ENCODE measurements at regions of chr19 and their contacts with region 1.

Region 1: GRCh38 chr19:18091217-18091608 is 4.5 kb upstream of the IL12RB1 start:
- DNase-seq: peak; percentile 55 to 94 (median 74)
- ATAC-seq: peak; percentile 69
- H3K4me3 ChIP-seq: no peak overlapping the region
- H3K4me3 Mint-ChIP-seq: peak overlapping the region; percentile 82
- H3K27ac ChIP-seq: peak overlapping the region; percentile 74 to 93
- H3K27ac Mint-ChIP-seq: peak overlapping the region; percentile 98
- H3K4me1 ChIP-seq: peaks cover 67% of the 10 kb centered on the region
- H3K4me1 Mint-ChIP-seq: peaks cover 58% of the 10 kb centered on the region
- H3K27me3 ChIP-seq: no peaks in the 10 kb centered on the region
- H3K27me3 Mint-ChIP-seq: no peaks in the 10 kb centered on the region
- CTCF ChIP-seq: no peak

Region 2: DNA sequence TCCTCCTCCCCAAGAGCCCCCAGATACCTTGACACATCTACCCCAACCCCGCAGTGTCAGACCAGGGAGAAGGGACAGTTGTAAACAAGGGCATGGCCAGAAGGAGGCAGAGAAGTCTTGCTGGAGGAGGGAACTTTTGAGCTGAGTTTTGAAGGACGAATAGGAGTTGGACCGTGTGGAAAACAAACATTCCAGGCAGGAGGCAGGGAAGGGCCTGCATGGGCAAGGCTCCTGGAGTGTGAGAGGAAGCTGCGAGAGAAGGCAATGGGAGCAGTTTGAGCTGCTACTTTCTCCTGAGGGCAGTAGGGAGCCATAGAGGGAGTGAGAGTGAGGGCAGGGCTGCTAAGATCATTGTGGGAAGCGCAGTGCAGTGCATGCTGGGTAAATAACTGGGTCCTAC is 27.8 kb before region 1 on chr19:
- CTCF ChIA-PET with region 1: interaction called, 10 read pairs
- POLR2A ChIA-PET with region 1: interaction called, 5 read pairs
- intact Hi-C with region 1: no loop called
- DNase-seq: peak in 8 of 14 experiments; percentile 24 to 65 (median 41)
- ATAC-seq: no peak
- H3K4me3 ChIP-seq: no peak overlapping the region
- H3K4me3 Mint-ChIP-seq: no peak overlapping the region
- H3K27ac ChIP-seq: no peak overlapping the region
- H3K27ac Mint-ChIP-seq: no peak overlapping the region
- H3K4me1 ChIP-seq: peaks cover 4% of the 10 kb centered on the region
- H3K4me1 Mint-ChIP-seq: peaks cover 4% of the 10 kb centered on the region
- H3K27me3 ChIP-seq: no peaks in the 10 kb centered on the region
- H3K27me3 Mint-ChIP-seq: no peaks in the 10 kb centered on the region
- CTCF ChIP-seq: no peak

Region 3: GRCh38 chr19:18141031-18141430 is 49.8 kb after region 1 on chr19:
- CTCF ChIA-PET with region 1: no interaction called
- POLR2A ChIA-PET with region 1: no interaction called
- intact Hi-C with region 1: no loop called
- DNase-seq: no peak
- ATAC-seq: no peak
- H3K4me3 ChIP-seq: no peak overlapping the region
- H3K4me3 Mint-ChIP-seq: no peak overlapping the region
- H3K27ac ChIP-seq: no peak overlapping the region
- H3K27ac Mint-ChIP-seq: no peak overlapping the region
- H3K4me1 ChIP-seq: no peaks in the 10 kb centered on the region
- H3K4me1 Mint-ChIP-seq: no peaks in the 10 kb centered on the region
- H3K27me3 ChIP-seq: no peaks in the 10 kb centered on the region
- H3K27me3 Mint-ChIP-seq: no peaks in the 10 kb centered on the region
- CTCF ChIP-seq: no peak

Region 4: DNA sequence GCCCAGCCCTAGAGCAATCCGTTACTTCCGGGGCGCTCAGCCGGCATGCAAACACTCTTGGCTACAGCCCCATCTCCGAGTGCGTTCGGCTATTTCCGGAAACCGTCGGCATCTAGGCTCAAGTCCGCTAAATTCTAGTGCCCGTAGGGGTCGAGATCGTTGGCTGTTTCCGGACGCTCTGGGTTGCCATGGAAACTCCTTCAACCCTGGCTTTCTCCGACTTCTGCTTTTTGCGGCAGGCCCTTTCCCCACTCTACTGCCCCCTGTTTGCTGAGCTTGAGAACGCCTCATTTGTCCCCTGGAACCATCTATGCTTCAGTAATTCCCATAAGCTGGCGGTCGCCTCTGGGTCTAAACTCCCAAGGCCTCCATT is 61.2 kb after region 1 on chr19:
- CTCF ChIA-PET with region 1: interaction called, 9 read pairs
- POLR2A ChIA-PET with region 1: interaction called, 10 read pairs
- intact Hi-C with region 1: no loop called
- DNase-seq: peak; percentile 94 to 99 (median 98)
- ATAC-seq: peak; percentile 67
- H3K4me3 ChIP-seq: peak overlapping the region; percentile 78
- H3K4me3 Mint-ChIP-seq: peak overlapping the region; percentile 86
- H3K27ac ChIP-seq: peak overlapping the region; percentile 64 to 88
- H3K27ac Mint-ChIP-seq: peak overlapping the region; percentile 80
- H3K4me1 ChIP-seq: peaks cover 36% of the 10 kb centered on the region
- H3K4me1 Mint-ChIP-seq: peaks cover 23% of the 10 kb centered on the region
- H3K27me3 ChIP-seq: no peaks in the 10 kb centered on the region
- H3K27me3 Mint-ChIP-seq: no peaks in the 10 kb centered on the region
- CTCF ChIP-seq: peak; percentile 58

Measured in CD4-positive, alpha-beta T cell (primary cell).